AG04450 (cell line): ENCODE measurements at regions of chr1 and their contacts with region 1.

Region 1: GRCh38 chr1:201500670-201501120 is 6.2 kb downstream of the CSRP1 start:
- DNase-seq: no peak
- H3K4me3 ChIP-seq: no peak overlapping the region; the same call in 1 of the 2 replicates
- H3K27ac ChIP-seq: peak overlapping the region; percentile 72
- H3K27me3 ChIP-seq: no peaks in the 10 kb centered on the region
- CTCF ChIP-seq: no peak

Region 2: GRCh38 chr1:201171063-201172036 is 329.3 kb before region 1 on chr1:
- CTCF ChIA-PET with region 1: no interaction called
- POLR2A ChIA-PET with region 1: no interaction called
- DNase-seq: no peak
- H3K4me3 ChIP-seq: peak overlapping the region; percentile 70
- H3K27ac ChIP-seq: peak overlapping the region; percentile 31
- H3K27me3 ChIP-seq: peaks cover 10% of the 10 kb centered on the region
- CTCF ChIP-seq: peak; percentile 52

Region 3: DNA sequence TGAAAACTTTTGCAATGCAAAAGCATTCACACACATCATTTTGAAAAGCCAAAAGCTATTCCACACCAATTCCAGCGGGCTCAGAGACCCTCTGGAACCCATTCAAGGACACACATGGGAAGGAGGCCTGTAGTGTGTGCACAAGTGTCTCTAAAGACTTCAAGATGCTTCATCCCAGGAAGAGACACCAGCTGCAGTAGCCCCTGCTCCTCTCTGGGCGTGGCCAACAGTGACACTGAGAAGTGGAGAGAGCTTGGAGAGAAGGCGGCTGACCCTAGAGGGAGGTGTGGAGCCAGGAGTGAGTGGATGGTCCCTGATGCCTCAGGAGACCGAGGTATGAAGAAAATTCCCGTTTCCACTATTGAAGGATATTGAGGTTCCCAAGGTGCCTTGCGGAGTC is 64.3 kb before region 1 on chr1:
- CTCF ChIA-PET with region 1: interaction called, 17 read pairs
- POLR2A ChIA-PET with region 1: interaction called, 4 read pairs
- DNase-seq: no peak
- H3K4me3 ChIP-seq: no peak overlapping the region
- H3K27ac ChIP-seq: no peak overlapping the region
- H3K27me3 ChIP-seq: peaks cover 4% of the 10 kb centered on the region
- CTCF ChIP-seq: peak; percentile 36

Region 4: DNA sequence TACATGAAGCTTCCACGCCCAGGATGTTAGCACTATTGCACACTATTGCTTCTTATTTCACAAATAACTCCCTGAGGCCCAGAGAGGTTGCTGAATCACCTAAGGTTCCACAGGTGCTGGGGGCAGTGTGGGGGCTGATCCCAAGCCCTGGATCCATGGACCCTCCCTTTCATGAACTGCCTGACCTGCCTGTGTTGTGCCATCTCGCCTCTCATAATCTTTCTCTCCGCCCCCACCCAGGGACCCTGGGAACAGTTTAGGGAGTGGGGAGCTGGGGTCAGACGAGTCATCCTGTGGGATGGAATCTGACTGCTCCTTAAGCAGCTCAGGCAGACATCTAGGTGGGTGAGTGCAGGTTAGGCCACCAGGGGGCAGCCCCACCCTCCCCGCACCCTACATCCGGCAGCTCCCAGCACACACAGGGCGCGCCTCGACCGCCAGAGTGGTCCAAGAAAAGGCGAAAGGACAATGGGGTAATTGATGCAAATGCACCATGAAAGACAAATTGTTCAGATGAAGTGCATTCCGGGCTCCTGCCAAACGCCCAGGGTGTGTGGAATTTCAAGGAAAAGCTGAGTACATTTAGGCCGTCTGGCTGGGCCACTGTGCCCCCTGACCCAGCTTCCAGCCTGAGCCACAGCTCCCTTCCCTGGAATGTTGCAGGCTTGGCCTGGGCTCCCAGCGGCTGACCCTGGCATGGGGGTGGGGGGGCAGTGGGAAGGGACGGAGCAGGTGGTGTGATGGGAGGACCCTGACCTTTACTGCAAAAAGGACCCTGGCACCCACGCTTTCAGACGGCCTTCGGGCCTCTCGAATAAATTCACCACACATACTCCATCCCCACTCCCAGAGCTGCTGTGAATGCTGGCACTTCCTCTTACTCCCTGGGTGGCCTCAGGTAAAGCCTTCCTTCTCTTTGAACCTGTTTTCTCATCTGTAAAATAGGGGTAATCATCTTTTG is 52.5 kb before region 1 on chr1:
- CTCF ChIA-PET with region 1: interaction called, 27 read pairs
- POLR2A ChIA-PET with region 1: interaction called, 3 read pairs
- DNase-seq: peak; percentile 33
- H3K4me3 ChIP-seq: no peak overlapping the region
- H3K27ac ChIP-seq: no peak overlapping the region
- H3K27me3 ChIP-seq: no peaks in the 10 kb centered on the region
- CTCF ChIP-seq: peak; percentile 82

Region 5: GRCh38 chr1:201456499-201457309 is 44.0 kb before region 1 on chr1:
- CTCF ChIA-PET with region 1: no interaction called
- POLR2A ChIA-PET with region 1: interaction called, 18 read pairs
- DNase-seq: peak; percentile 88
- H3K4me3 ChIP-seq: no peak overlapping the region; the same call in 1 of the 2 replicates
- H3K27ac ChIP-seq: peak overlapping the region; percentile 95
- H3K27me3 ChIP-seq: no peaks in the 10 kb centered on the region
- CTCF ChIP-seq: no peak

Region 6: DNA sequence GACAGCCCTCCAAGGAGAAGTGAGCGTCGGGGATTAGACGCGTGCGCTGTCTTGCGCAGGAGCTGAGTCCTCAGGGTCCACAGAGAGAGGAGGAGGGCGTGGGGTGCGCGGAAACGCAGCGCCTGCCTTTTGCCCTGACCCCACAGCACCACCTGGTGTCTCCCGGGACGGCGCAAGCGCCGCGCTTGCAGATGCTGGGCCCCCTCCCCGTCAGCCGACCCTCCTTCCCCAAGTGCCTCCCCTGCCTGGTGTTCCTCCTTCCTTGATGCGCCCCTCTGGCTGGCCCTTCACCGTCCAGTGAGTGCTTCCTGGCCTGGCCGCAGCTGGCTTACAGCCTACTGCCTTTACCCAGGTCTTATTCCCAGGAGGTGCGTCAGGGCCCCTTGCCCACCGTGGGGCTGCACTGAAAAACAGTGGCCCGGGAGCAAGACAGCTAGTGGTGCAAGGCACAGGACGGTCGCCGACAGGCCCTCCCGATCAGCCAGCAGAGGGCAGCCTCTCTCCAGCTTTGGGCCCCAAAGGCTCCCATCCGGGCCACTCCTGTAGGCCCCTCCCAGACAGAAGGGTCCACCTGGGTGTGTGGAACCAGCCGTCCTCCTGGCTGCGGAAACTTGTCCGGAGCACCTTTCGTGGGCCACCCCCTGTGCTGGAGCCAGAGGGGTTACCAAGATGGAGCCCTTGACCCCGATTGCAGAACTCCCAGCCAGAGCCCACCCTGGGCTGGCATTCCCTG is 18.8 kb before region 1 on chr1:
- CTCF ChIA-PET with region 1: interaction called, 17 read pairs
- POLR2A ChIA-PET with region 1: interaction called, 66 read pairs
- DNase-seq: no peak
- H3K4me3 ChIP-seq: no peak overlapping the region
- H3K27ac ChIP-seq: no peak overlapping the region
- H3K27me3 ChIP-seq: no peaks in the 10 kb centered on the region
- CTCF ChIP-seq: peak; percentile 82